ENCODE measurements at regions of chr4 and their contacts with region 1.

Region 1: DNA sequence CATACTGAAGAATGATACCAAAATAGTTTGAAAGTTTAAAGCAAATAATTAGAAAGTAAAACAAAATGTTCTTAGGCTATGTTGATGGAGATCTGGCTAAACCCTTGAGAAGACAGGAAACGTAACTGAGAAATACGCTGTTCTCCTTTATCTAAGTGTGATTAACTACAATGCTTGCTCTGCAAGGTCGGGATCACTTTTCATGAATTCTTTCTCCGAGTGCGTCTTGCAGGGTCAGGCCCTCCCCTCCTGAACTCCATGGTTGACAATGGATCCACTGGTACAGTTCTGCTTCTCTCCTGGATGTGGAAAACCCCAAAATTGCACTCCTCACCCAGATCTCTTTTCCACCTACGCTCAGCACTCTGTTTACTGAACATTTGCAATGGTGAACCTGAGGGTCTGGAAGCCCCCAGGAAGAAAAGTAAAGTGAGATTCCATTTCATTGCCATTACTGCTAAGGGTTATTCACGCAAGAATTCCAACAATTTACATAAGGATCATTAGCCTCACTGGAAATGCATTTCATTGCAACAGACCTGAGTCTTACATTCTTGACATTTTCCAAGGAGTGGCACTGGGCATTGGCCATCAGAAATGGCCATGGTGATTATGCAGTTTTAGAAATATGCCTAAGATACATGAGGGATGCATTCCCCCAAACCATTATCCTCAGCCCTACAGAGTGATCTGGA is 24.6 kb upstream of the WWC2 start:
- DNase-seq: no peak
- H3K4me3 ChIP-seq: no peak overlapping the region
- H3K27ac ChIP-seq: no peak overlapping the region
- H3K4me1 ChIP-seq: no peaks in the 10 kb centered on the region
- H3K27me3 ChIP-seq: no peaks in the 10 kb centered on the region
- CTCF ChIP-seq: no peak
- EP300 ChIP-seq: no peak
- POLR2A ChIP-seq: no peak

Region 2: DNA sequence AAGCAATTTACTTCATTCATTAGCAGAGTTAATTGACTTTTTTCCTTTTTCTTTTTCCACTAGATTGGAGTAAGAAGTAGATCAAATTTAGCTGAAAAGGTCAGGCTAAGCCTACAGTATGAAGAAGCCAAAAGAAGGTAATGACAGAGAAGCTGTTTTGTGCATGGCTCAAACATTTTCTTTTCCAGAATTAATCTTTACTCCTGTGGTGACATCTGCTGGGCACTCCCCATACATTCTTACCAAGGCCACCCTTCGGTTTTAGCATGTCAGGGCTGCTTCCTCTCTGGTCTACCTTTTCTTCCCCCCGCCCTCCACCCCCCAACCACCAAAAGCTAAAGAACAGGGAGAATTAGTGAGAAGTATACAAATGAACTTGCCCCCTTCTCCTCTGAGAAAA is 175.4 kb after region 1 on chr4:
- intact Hi-C with region 1: loop called in 1 of 4 experiments (anchors 5 kb)
- DNase-seq: no peak
- H3K4me3 ChIP-seq: no peak overlapping the region
- H3K27ac ChIP-seq: no peak overlapping the region
- H3K4me1 ChIP-seq: peaks cover 2% of the 10 kb centered on the region
- H3K27me3 ChIP-seq: no peaks in the 10 kb centered on the region
- CTCF ChIP-seq: no peak
- EP300 ChIP-seq: no peak
- POLR2A ChIP-seq: no peak

Region 3: GRCh38 chr4:183256756-183257385 is 182.4 kb after region 1 on chr4:
- intact Hi-C with region 1: loop called (anchors 2 to 5 kb)
- DNase-seq: peak; percentile 54 to 74 (median 66)
- H3K4me3 ChIP-seq: no peak overlapping the region
- H3K27ac ChIP-seq: no peak overlapping the region
- H3K4me1 ChIP-seq: peaks cover 2% of the 10 kb centered on the region
- H3K27me3 ChIP-seq: no peaks in the 10 kb centered on the region
- CTCF ChIP-seq: peak; percentile 49 to 77 (median 52)
- EP300 ChIP-seq: no peak
- POLR2A ChIP-seq: no peak

Region 4: DNA sequence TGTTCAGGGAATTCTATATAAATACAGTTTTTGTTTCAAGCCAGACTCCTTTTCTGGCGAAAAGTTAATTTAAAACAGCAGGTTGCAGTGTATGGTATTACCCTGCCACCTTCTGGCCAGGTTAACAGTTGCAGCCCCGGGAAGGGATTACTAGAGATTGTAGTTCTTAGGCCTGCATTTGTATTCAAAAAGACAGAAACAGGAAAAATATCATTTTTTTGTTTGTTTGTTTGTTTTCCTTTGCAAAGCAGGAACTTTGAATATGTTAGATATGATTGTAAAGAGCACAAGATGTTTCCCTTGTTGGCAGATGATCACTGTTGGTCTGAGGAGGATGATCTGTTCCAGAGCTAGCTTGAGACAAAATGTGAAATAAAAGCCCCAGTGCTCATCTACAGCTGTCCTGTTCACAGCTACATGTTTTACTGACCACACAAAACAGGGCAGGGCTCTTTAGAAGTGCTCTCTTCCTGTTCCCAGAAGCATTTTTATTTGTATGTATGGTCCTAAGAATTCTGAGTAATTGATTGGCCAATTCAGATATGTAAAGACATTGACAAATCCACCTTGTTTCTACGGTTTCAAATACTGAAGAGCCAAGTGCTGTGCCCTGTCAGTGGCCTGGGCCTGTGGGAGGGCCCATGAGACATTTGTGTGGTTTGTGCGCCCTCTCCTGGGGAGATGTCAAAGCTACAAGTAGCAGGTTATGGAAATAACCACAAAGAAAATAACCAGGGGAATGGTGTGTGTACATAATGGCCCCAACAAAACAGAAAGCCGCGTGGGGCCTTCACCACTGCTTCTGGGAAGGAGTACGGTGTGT is 187.7 kb after region 1 on chr4:
- intact Hi-C with region 1: loop called in 3 of 4 experiments (anchors 2 to 5 kb)
- DNase-seq: peak; percentile 71 to 84 (median 83)
- H3K4me3 ChIP-seq: no peak overlapping the region
- H3K27ac ChIP-seq: no peak overlapping the region
- H3K4me1 ChIP-seq: no peaks in the 10 kb centered on the region
- H3K27me3 ChIP-seq: no peaks in the 10 kb centered on the region
- CTCF ChIP-seq: peak; percentile 50 to 76 (median 60)
- EP300 ChIP-seq: no peak
- POLR2A ChIP-seq: no peak